Caco-2 (cell line): ENCODE measurements at regions of chr7 and their contacts with region 1.

Region 1: GRCh38 chr7:157336383-157337315 is at the start of gene DNAJB6:
- DNase-seq: peak; percentile 92 to 95
- H3K4me3 ChIP-seq: peak within 1 kb of the TSS; percentile 80
- H3K4me3 Mint-ChIP-seq: peak within 1 kb of the TSS; percentile 93
- H3K27ac Mint-ChIP-seq: peak within 1 kb of the TSS; percentile 91
- H3K4me1 ChIP-seq: peaks cover 6% of the 10 kb centered on the region
- H3K4me1 Mint-ChIP-seq: peaks cover 15% of the 10 kb centered on the region
- H3K27me3 ChIP-seq: no peaks in the 10 kb centered on the region
- H3K27me3 Mint-ChIP-seq: no peaks in the 10 kb centered on the region
- CTCF ChIP-seq: no peak
- total RNA-seq, gene DNAJB6: 108 and 113 TPM in 2 replicates

Region 2: DNA sequence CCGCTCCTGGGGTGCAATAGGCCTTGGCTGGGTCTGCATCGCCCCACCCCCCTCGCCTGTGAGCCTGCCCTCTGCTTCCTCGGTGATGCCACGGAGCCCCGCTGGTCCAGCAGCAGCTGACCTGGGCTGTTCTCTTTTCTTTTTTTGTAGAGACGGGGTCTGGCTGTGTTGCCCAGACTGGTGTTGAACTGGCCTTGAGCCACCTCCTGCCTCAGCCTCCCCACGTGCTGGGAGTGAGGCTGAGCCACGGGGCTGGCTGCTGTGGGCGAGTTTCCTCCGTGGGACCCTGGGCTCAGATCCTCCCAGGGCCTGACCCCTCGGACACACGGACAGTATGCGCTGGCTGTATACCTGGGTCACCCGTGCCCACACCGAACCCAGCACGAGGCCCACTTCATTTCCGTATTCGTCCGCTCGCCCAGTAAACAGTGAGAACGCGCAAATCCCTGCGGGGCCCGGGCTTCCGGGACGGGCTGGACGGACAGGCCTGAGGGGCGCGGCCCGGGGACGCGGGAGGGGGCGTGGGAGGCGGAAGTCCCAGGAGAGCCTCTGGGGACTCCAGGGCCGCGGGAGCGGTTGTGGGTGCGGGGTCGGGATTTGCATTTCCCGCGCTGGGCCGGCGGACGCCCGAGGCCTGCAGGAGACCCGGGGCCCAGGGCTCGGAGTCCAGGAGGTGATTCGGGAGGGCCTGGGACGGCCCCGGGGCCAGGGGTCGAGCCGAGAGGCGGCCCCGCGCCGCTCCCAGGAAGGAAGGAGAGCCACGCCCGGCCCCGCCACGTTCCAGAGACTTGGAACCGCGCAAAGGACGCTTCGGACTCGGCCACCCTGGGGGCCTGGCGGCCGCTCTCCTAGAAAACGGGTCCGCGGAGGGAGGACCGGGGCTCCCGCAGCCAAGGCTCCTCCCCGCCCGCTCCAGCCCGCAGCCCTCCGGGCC is 57.6 kb before region 1 on chr7:
- CTCF ChIA-PET with region 1: no interaction called
- POLR2A ChIA-PET with region 1: no interaction called
- intact Hi-C with region 1: loop called (anchors 2 kb)
- DNase-seq: peak; percentile 74 to 76
- H3K4me3 ChIP-seq: peak overlapping the region; percentile 71
- H3K4me3 Mint-ChIP-seq: peak overlapping the region; percentile 70
- H3K27ac Mint-ChIP-seq: no peak overlapping the region
- H3K4me1 ChIP-seq: peaks cover 14% of the 10 kb centered on the region
- H3K4me1 Mint-ChIP-seq: no peaks in the 10 kb centered on the region
- H3K27me3 ChIP-seq: no peaks in the 10 kb centered on the region
- H3K27me3 Mint-ChIP-seq: no peaks in the 10 kb centered on the region
- CTCF ChIP-seq: no peak

Region 3: GRCh38 chr7:157309990-157310668 is 26.5 kb before region 1 on chr7:
- CTCF ChIA-PET with region 1: no interaction called
- POLR2A ChIA-PET with region 1: no interaction called
- intact Hi-C with region 1: loop called (anchors 1 kb)
- DNase-seq: no peak
- H3K4me3 ChIP-seq: no peak overlapping the region
- H3K4me3 Mint-ChIP-seq: no peak overlapping the region
- H3K27ac Mint-ChIP-seq: peak overlapping the region; percentile 79
- H3K4me1 ChIP-seq: peaks cover 11% of the 10 kb centered on the region; the same call in 1 of the 2 replicates
- H3K4me1 Mint-ChIP-seq: peaks cover 27% of the 10 kb centered on the region
- H3K27me3 ChIP-seq: no peaks in the 10 kb centered on the region
- H3K27me3 Mint-ChIP-seq: no peaks in the 10 kb centered on the region
- CTCF ChIP-seq: no peak

Region 4: DNA sequence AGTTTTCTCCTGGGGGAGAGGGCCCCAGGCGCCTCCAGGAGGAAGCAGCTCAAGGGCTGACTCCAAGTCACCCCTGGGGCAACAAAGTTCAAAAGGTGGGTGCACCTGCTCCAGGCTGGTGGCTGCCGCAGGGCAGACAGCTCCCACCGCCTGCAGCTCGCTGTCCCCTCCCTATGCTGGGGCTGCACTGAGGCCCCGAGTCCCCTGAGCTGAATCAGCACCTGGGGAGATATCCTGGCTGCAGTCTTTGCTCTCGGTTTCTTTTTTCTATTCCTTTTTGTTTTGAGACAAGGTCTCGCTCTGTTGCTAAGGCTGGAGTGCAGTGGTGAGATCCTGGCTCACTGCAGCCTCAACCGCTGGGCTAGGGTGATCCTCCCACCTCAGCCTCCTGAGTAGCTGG is 183.6 kb after region 1 on chr7:
- CTCF ChIA-PET with region 1: no interaction called
- POLR2A ChIA-PET with region 1: no interaction called
- intact Hi-C with region 1: no loop called
- DNase-seq: no peak
- H3K4me3 ChIP-seq: no peak overlapping the region
- H3K4me3 Mint-ChIP-seq: no peak overlapping the region
- H3K27ac Mint-ChIP-seq: no peak overlapping the region
- H3K4me1 ChIP-seq: no peaks in the 10 kb centered on the region
- H3K4me1 Mint-ChIP-seq: no peaks in the 10 kb centered on the region
- H3K27me3 ChIP-seq: no peaks in the 10 kb centered on the region
- H3K27me3 Mint-ChIP-seq: peaks cover 10% of the 10 kb centered on the region
- CTCF ChIP-seq: no peak